ENCODE measurements at regions of chr19 and their contacts with region 1.

Region 1: DNA sequence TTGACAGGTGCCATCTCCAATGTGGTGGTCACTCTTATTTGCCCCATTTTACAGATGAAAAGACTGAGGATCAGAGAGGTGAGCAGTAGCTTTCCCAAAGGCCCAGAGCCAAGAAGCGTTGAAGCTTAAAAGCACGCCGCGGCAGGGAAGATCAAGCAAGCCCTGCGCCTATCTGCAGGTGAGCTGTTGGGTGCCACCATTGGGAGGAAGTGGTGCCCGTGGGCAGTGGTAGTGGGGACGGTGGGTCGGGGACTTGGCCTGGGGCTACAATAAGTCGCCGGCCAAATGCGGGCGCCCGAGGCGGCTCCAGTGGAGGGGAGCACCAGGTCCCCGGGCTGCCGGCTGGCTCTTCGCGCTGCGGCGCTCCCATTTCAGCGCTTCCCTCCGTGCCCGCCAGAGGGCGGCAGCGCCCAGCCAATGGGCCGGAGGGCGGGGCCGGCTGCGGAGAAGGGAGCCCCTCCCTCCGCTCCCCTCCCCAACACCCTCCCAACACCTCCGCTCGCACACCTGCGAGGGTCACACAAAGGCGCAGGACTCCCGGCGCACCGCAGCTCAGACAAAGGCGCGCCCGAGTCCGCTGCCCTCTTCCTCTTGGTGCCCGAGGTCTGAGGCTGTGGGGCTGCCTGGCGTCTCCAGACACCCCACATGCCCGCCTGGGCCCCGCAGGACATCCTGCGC is 744 bp upstream of the POU2F2 start:
- DNase-seq: peak; percentile 92
- H3K4me3 ChIP-seq: peak overlapping the region; percentile 96
- H3K27ac ChIP-seq: peak overlapping the region; percentile 93
- H3K4me1 ChIP-seq: peaks cover 63% of the 10 kb centered on the region
- CTCF ChIP-seq: peak; percentile 90

Region 2: GRCh38 chr19:42098781-42099180 is 34.2 kb before region 1 on chr19:
- CTCF ChIA-PET with region 1: no interaction called
- POLR2A ChIA-PET with region 1: no interaction called
- intact Hi-C with region 1: no loop called
- DNase-seq: no peak
- H3K4me3 ChIP-seq: no peak overlapping the region
- H3K27ac ChIP-seq: no peak overlapping the region
- H3K4me1 ChIP-seq: no peaks in the 10 kb centered on the region
- CTCF ChIP-seq: no peak

Region 3: DNA sequence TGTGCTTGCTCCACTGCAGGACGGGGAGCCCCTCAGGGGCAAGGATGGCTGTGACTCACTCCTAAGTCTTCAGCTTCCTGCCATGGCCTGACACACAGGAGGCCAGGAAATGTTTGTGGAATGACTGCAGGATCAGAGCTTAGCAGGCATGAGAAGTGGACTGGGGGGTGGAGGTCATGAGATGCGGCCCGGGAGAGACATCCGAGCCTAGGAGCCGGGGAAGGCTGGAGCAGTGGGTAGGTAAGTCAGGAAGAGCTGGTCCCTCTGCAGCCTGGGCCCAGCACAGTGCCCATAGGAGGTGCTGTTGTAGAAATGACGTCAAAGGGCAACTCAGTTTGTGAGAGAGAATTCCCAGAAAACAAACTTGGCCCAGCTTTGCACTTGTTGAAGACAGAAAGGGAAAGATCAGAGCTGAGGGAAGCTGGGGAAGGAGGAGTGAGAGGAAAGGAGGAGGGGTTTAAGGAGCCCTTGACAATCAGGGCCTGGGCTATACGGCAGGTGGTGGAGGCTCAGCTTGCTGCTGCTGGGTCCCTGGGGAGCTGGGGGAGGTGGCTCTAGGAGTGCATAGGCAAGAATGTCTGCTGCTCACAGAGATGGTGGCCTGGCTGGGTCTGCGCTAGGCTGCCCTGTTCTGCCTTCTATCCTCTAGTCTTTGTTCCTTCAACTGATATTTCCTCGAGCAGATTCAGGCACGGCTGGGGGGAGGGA is 19.2 kb before region 1 on chr19:
- CTCF ChIA-PET with region 1: interaction called, 9 read pairs
- POLR2A ChIA-PET with region 1: interaction called, 17 read pairs
- intact Hi-C with region 1: loop called (anchors 1 kb)
- DNase-seq: peak; percentile 95
- H3K4me3 ChIP-seq: peak overlapping the region; percentile 59
- H3K27ac ChIP-seq: peak overlapping the region; percentile 97
- H3K4me1 ChIP-seq: peaks cover 99% of the 10 kb centered on the region
- CTCF ChIP-seq: peak; percentile 66

Region 4: GRCh38 chr19:42178791-42179674 is 46.0 kb after region 1 on chr19:
- CTCF ChIA-PET with region 1: no interaction called
- POLR2A ChIA-PET with region 1: interaction called, 4 read pairs
- intact Hi-C with region 1: loop called (anchors 1 kb)
- DNase-seq: peak; percentile 56
- H3K4me3 ChIP-seq: no peak overlapping the region
- H3K27ac ChIP-seq: no peak overlapping the region
- H3K4me1 ChIP-seq: peaks cover 48% of the 10 kb centered on the region
- CTCF ChIP-seq: peak; percentile 76

Region 5: DNA sequence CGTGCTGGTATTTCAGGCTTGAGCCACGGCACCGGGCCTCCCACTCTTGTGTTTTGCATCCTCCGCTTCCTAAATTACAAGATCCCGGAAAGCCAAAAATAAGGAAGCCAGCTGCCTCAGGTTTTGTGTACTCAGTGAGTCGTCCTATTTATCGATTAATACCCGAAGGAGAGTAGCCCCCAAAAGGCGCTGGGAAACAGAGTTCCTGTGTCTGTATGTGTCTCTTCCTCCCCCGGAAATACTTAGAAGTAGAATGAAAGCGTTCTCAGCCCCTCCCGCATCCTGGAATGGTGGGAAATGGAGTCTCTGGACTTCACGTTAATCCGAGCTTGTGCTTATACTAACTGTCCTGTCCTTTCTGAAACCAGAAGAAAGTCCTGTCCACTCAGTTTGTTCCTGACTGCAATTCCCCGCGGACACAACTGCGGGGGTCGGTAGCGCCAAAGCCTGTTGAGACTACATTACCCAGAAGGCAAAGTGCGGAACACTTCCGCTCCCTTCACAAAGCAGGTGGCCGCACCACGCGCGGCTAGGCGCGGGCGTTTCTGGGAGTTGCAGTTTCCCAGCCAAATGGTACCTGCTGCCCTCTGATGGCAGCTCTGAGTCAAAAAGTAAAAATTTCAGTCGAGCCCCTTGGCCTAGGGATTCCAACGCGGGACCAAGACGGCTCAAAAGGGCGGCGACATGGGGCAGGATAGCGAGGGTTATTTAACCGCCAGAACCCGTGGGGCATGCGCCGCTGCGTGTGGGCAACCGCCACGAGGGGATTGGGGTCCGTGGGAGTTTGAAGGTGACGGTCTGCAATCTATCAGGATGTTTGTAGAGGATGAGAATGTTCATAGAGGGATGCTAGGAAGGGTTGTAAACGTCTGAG is 111.6 kb after region 1 on chr19:
- CTCF ChIA-PET with region 1: no interaction called
- POLR2A ChIA-PET with region 1: no interaction called
- intact Hi-C with region 1: loop called (anchors 2 kb)
- DNase-seq: peak; percentile 96
- H3K4me3 ChIP-seq: peak overlapping the region; percentile 92
- H3K27ac ChIP-seq: peak overlapping the region; percentile 77
- H3K4me1 ChIP-seq: peaks cover 33% of the 10 kb centered on the region
- CTCF ChIP-seq: peak; percentile 81

Region 6: GRCh38 chr19:42295831-42296525 is 163.0 kb after region 1 on chr19:
- CTCF ChIA-PET with region 1: interaction called, 4 read pairs
- POLR2A ChIA-PET with region 1: no interaction called
- intact Hi-C with region 1: loop called (anchors 5 kb)
- DNase-seq: peak; percentile 81
- H3K4me3 ChIP-seq: no peak overlapping the region
- H3K27ac ChIP-seq: no peak overlapping the region
- H3K4me1 ChIP-seq: no peaks in the 10 kb centered on the region
- CTCF ChIP-seq: peak; percentile 92

Region 7: DNA sequence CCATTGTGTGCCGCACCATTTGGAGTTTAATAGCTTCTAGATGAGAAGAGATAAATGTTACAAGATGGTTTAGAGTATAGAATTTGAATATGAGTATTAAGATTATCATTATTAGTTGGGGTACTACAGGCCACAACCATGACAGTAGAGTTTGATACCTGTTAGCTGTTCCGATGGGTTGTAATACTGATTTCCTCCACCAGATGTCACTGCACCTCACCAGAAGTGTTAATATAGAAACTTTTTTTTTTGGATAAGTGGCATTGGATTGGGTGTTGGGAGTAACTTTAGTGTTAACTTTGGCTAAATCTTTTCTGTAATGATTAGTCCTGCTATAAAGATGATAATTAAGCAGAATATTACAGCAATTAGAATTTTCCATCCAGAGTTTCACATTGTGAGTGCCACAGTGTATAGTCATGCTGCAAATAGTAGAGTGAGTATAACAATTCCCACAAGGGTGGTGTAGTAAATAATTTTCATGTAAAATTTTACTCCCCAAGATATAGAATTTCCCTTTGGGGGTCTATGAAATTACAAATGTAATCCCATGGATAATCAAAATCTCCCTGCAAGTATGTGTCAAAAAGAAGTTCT is 551.0 kb after region 1 on chr19:
- CTCF ChIA-PET with region 1: no interaction called
- POLR2A ChIA-PET with region 1: no interaction called
- intact Hi-C with region 1: no loop called
- DNase-seq: peak; percentile 33
- H3K4me3 ChIP-seq: no peak overlapping the region
- H3K27ac ChIP-seq: no peak overlapping the region
- H3K4me1 ChIP-seq: no peaks in the 10 kb centered on the region
- CTCF ChIP-seq: peak; percentile 93